ENCODE measurements at regions of chr12 and their contacts with region 1.

Region 1: GRCh38 chr12:53321074-53321814 is at the start of gene AAAS:
- DNase-seq: peak; percentile 98
- total RNA-seq, gene AAAS: 39.8 TPM

Region 2: DNA sequence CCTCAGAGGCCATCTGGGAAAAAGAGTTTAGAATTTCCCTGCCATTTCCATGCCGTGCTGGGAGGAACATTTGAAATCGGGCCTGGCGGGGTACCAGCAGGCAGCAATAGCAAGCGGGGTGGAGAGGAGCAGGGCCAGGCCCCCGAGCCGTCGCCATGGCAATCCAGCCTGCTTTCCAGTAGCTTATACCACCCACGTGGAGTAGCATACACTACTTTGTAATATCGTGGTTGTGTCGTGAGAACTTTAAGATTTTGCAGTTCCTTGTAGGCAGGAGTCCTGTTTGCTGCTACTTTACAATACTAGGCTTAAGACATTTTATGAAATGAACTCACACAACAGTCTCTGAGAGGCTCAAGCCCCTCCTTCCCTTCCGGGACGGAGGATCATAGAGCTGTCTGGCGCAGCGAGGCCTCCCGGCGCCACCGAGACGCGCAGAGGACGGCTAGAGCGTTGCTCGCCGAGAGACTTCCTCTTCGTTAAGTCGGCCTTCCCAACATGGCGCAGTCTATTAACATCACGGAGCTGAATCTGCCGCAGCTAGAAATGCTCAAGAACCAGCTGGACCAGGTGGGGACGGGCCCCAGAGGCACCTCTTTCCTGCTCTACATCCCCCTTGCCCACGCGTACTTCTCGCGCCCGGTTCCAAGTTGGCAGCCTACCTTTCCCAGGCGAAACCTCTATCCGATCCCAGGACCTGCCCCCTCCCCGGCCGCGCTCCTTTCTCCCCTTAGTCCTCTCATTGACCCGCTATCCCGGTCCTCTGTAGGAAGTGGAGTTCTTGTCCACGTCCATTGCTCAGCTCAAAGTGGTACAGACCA is 26.0 kb before region 1 on chr12 and contains the start of gene PFDN5:
- intact Hi-C with region 1: loop called (anchors 2 kb)
- DNase-seq: peak; percentile 96
- total RNA-seq, gene PFDN5: 322 TPM

Region 3: DNA sequence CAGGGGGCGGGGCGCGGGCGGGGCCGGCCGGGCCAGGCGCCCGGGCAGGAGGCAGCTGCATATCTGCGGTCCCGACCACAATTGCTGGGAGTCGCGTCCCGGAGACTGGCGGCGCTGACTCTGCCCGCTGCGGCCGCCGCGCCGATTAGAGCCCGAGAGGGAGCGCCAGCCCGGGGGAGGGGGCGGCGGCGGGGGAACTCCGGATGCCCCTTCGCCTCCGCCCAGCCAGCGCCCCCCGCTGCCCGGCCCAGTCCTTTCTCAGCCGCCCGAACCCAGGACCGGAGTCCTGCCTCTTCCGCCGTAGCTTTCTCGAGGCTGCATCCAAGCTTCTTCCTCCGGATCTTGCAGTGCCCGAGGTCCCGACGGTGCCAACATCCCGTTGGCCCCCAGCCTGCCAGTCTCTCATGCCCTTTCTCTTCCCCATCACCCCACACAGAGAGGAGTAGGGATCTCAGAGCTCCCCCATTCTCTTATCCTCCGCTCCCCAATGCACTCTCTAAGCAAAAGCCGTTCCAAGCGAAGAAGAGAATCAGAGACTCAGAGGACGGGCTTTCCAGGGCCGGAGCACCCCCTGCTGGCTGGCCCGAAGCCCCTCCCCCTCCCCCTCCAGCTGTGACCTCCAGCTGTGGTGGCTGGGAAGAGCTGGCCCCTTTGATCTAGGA is 23.7 kb after region 1 on chr12:
- intact Hi-C with region 1: loop called (anchors 1 kb)
- DNase-seq: peak; percentile 84

Region 4: DNA sequence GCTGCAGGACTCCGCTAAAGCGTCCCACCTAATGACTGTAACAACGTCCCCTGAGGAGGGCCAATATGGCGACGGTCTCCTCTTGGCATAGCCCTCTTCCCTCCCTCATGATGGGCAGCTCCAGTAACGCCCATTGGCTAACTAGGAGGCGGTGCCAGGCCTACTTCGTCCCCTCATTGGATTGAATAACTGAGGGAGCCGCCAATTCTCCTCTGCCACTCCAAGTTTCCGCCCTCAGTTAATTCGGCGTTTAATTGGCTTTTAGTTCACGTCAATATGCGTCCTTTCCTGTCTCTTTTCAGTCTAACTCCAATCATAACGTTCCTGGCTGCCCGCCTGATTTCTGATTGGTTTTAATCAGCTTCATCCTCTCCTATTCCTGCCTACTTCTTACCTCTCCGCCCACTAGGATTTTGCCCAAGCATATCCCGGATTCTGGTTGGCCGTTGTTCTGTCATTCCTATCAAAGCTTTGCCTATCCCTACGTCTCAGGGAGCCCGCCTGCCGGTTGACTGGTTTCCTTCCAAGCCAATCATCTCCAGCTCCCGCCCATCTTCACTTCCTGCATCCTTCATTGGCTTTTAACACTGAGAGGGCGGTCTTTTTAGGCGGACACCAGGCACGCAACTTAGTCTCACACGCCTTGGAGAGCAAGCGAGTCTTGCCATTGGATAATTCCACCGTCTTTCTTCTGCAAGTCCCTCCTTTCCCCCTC is 58.3 kb after region 1 on chr12:
- intact Hi-C with region 1: loop called (anchors 5 kb)
- DNase-seq: peak; percentile 99

Region 5: GRCh38 chr12:53757095-53757770 is 436.0 kb after region 1 on chr12:
- intact Hi-C with region 1: no loop called
- DNase-seq: peak; percentile 87